Activated B cell treated with CpG ODN at 0.5 μM for 24 hours (primary cell): ENCODE measurements at regions of chr4 and their contacts with region 1.

Region 1: GRCh38 chr4:140743194-140743931 is 12.8 kb downstream of the TBC1D9 start:
- DNase-seq: no peak
- ATAC-seq: peak; percentile 77
- H3K4me3 Mint-ChIP-seq: peak overlapping the region; percentile 80
- H3K27ac Mint-ChIP-seq: peak overlapping the region; percentile 97
- H3K4me1 Mint-ChIP-seq: peaks cover 88% of the 10 kb centered on the region
- H3K27me3 Mint-ChIP-seq: no peaks in the 10 kb centered on the region
- CTCF ChIP-seq: no peak

Region 2: DNA sequence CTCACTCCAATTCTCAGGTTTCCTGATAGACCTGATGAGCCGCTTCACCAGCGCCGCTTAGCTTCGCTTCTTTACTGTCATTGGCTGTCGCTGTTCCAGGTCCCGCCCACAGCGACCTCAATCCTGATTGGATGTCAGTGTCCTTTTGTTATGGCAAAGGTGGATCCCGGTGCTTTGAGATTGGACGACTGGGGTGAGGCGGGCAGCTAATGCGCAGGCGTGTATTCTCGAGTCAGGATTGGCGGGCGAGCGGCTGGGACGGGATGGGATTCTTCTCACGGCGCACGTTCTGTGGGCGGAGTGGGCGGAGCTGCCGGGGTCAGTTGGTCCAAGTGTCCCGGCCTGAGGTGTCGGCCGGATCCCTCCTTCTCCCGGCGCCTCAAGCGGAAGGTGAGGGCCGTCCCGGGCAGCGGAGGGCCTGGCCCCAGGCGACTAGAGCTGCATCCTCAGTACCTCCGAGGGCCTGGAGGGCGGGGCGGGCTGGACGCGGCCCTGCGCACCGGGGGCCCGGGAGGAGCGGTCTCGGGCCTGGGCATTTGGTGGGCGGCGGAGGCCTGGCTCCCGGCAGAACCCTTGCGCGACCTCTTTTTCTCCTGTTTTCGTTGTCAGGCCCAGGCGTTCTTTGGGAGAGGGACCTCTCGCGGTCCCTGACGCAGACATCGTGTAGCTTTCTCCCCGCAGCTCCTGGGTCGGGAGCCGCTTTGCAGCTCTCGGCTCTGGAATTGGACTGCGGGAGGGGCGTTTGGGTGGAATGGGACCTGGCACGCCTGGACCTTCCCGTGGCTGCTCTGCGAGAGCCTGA is 369.8 kb before region 1 on chr4 and contains the start of gene SCOC:
- CTCF ChIA-PET with region 1: no interaction called
- POLR2A ChIA-PET with region 1: no interaction called
- intact Hi-C with region 1: loop called (anchors 2 kb)
- DNase-seq: peak; percentile 85
- ATAC-seq: peak; percentile 95
- H3K4me3 Mint-ChIP-seq: no peak within 1 kb of the TSS
- H3K27ac Mint-ChIP-seq: peak within 1 kb of the TSS; percentile 74
- H3K4me1 Mint-ChIP-seq: peaks cover 22% of the 10 kb centered on the region
- H3K27me3 Mint-ChIP-seq: no peaks in the 10 kb centered on the region
- CTCF ChIP-seq: no peak
- total RNA-seq, gene SCOC: 18.0 and 19.9 TPM in 2 replicates

Region 3: DNA sequence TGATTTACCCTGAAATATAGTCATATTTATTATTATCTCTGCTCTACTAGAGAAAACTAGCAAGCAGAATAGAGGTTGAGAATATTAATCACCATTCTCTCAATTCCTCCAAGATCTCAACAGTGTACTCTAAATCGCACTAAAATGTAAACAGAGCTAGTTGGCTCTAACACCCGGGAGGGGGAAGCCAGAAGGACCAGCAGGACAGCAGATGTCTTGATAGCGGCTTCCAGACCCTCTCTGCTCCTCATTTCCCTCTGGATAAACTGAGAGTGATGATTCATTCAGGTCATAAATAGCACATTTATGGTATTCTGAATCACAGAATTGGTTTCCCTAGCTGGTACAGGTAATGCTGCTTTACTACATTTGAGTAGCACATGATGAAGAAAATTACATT is 69.6 kb before region 1 on chr4:
- CTCF ChIA-PET with region 1: no interaction called
- POLR2A ChIA-PET with region 1: no interaction called
- intact Hi-C with region 1: loop called (anchors 5 kb)
- DNase-seq: no peak
- ATAC-seq: no peak
- H3K4me3 Mint-ChIP-seq: no peak overlapping the region
- H3K27ac Mint-ChIP-seq: no peak overlapping the region
- H3K4me1 Mint-ChIP-seq: peaks cover 21% of the 10 kb centered on the region
- H3K27me3 Mint-ChIP-seq: no peaks in the 10 kb centered on the region
- CTCF ChIP-seq: no peak

Region 4: DNA sequence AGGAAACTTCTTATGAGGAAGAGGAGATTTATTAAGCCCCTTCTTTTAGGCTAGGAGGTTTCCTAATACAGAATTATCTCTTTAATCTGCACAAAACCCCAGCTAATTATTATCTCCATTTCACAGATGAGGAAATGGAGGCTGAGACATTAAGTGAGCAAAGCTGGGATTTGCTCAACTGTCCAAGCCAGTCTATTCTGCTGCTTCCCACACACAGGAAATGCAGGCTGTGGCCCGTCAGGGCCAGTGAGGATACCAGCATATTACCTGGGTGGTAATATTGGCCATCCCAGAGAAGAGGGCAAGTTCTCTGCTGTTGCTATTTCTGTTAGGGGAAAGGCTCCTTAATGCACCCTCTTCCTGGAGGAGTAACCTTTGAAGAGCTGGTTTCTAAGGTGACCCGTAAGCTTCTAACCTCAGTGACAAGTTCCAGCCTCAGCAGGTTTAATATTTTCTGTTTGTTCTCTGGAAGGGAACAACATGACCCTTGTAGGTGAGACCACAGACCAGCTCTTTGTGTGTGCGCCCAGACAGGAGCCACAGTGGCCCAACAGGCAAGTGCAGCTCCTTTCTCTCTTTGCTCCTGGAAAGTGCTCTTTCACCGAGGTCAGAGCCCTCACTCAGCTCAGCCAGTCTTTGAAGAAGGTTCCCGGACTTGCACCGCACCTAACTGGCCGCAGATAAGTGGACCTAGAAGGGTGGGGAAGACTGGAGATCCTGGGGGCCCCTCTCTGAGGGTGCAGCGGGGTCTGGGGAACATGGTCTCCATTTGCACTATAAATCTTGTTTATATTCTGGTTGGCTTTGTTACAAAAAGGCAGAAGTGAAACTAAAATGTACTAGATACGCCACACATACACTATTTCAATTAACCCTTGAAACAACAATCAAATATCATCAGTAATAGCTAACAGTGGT is 22.7 kb before region 1 on chr4:
- CTCF ChIA-PET with region 1: interaction called, 11 read pairs
- POLR2A ChIA-PET with region 1: interaction called, 53 read pairs
- intact Hi-C with region 1: loop called (anchors 1 kb)
- DNase-seq: peak; percentile 40
- ATAC-seq: peak; percentile 56
- H3K4me3 Mint-ChIP-seq: peak overlapping the region; percentile 84
- H3K27ac Mint-ChIP-seq: peak overlapping the region; percentile 98
- H3K4me1 Mint-ChIP-seq: peaks cover 89% of the 10 kb centered on the region
- H3K27me3 Mint-ChIP-seq: no peaks in the 10 kb centered on the region
- CTCF ChIP-seq: no peak

Region 5: DNA sequence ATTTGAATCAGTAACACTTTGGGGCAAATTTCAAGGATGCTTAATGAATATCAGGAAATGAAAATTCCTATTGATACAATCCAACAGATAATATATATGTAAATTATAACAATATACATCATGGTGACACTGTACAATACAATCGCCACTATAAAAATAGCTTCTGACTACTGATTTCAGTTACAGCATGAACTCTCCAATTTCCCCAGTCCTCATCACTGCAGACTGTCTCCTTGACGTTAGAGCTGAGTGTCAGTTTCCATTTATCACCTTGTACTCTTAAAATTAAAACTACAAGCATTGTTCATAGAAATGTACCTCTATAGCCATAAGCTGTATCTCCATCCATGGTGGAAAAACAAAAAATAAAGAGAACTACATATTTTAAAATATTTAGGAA is 10.6 kb before region 1 on chr4:
- CTCF ChIA-PET with region 1: interaction called, 4 read pairs
- POLR2A ChIA-PET with region 1: interaction called, 10 read pairs
- intact Hi-C with region 1: loop called (anchors 1 kb)
- DNase-seq: no peak
- ATAC-seq: no peak
- H3K4me3 Mint-ChIP-seq: no peak overlapping the region
- H3K27ac Mint-ChIP-seq: no peak overlapping the region
- H3K4me1 Mint-ChIP-seq: peaks cover 81% of the 10 kb centered on the region
- H3K27me3 Mint-ChIP-seq: no peaks in the 10 kb centered on the region
- CTCF ChIP-seq: no peak

Region 6: GRCh38 chr4:140790765-140791164 is 47.4 kb after region 1 on chr4:
- CTCF ChIA-PET with region 1: interaction called, 6 read pairs
- POLR2A ChIA-PET with region 1: interaction called, 20 read pairs
- intact Hi-C with region 1: loop called (anchors 1 kb)
- DNase-seq: peak; percentile 67
- ATAC-seq: peak; percentile 93
- H3K4me3 Mint-ChIP-seq: peak overlapping the region; percentile 48
- H3K27ac Mint-ChIP-seq: peak overlapping the region; percentile 71
- H3K4me1 Mint-ChIP-seq: peaks cover 76% of the 10 kb centered on the region
- H3K27me3 Mint-ChIP-seq: no peaks in the 10 kb centered on the region
- CTCF ChIP-seq: no peak

Region 7: GRCh38 chr4:140829825-140830224 is 86.5 kb after region 1 on chr4:
- CTCF ChIA-PET with region 1: no interaction called
- POLR2A ChIA-PET with region 1: interaction called, 3 read pairs
- intact Hi-C with region 1: loop called (anchors 1 kb)
- DNase-seq: no peak
- ATAC-seq: peak; percentile 95
- H3K4me3 Mint-ChIP-seq: peak overlapping the region; percentile 33
- H3K27ac Mint-ChIP-seq: peak overlapping the region; percentile 91
- H3K4me1 Mint-ChIP-seq: peaks cover 73% of the 10 kb centered on the region
- H3K27me3 Mint-ChIP-seq: no peaks in the 10 kb centered on the region
- CTCF ChIP-seq: no peak